Thyroid gland (tissue), 4 donors: ENCODE measurements at regions of chr3 and their contacts with region 1.

Region 1: DNA sequence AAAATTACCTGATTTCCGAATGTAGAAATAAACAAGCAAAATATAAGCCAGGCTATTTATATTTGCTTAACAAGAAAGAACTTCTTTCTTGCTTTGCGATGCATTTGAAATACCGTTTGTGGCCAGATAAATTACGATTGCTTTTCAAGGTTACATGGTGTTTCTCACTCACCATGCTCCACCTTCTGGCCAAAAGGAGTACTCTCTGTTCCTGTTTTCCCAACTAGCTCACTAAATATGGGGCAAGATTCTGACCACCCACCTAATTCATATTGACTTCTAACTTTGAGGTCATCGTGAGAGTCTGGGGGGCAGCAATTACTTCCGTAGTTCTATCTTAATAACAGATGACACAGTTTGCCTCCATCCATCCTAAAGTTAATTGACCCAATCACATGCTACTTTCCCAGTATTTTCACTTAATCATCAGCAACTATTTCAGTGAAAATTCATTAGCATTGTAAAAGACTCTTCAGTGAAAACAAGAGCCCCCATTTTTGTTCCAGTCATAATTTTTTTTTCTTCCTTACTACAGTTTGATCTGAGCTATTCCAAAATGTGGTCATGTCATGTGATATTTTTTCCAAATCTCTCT is 25.9 kb downstream of the ACP3 start:
- DNase-seq: peak; percentile 43 to 45
- H3K4me3 ChIP-seq: no peak overlapping the region
- H3K27ac ChIP-seq: no peak overlapping the region
- H3K4me1 ChIP-seq: peaks cover 6 to 12% of the 10 kb centered on the region in 2 donors
- H3K27me3 ChIP-seq: no peaks in the 10 kb centered on the region
- CTCF ChIP-seq: peak; percentile 73 to 99 (median 87)
- POLR2A ChIP-seq: no peak

Region 2: DNA sequence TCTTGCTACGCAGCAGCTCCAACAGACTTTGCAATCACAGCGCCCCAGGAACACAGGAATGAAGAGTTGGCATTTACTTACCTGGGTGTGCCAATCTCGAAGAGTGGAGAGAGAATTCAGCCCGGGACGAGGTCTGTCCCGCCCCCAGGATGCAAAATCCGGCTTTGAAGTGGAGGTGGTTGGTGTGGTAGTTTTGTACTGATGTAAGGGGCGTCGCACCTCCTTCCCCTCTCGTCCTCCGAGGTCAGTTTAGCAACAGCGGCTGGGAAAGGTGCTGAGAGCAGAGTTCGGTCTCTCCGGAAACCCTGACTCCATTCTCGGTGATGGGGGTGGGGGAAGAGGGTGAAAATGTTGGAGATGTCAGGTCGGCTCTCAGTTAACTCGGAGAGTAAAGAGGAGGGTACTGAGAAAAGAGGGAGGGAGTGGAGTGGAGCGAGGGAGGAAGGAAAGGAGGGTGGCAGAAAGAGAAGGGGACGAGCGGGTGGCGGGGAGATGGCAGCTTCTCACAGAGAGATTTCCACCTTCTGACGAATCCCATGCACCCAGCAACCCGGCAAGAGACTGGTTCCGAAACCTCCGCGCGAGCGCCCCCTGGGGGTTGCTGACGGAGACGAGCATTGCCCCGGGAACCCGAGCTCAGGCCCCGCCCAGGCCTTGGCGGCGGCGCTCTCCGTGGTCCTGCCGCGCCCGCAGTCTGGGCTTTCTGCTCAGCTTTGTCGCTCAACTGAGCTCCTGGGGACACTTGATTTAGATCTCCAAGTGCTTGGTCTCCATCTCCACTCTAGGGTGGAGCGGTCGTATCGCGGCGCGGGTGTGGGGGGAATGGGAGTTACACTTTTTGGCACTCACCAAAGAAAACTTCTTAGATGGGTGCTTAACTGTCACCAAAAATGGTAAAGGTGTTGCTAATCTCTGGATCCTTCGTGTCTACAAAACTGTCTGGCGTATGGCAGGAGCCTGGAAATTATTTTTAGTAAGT is 308.3 kb before region 1 on chr3 and contains the start of gene CPNE4:
- intact Hi-C with region 1: loop called (anchors 10 kb)
- DNase-seq: peak; percentile 81 to 89
- H3K4me3 ChIP-seq: no peak within 1 kb of the TSS
- H3K27ac ChIP-seq: no peak within 1 kb of the TSS
- H3K4me1 ChIP-seq: no peaks in the 10 kb centered on the region
- H3K27me3 ChIP-seq: no peaks in the 10 kb centered on the region
- CTCF ChIP-seq: peak in 5 of 6 experiments; percentile 51 to 78 (median 67)
- POLR2A ChIP-seq: no peak
- total RNA-seq, gene CPNE4: not detected

Region 3: DNA sequence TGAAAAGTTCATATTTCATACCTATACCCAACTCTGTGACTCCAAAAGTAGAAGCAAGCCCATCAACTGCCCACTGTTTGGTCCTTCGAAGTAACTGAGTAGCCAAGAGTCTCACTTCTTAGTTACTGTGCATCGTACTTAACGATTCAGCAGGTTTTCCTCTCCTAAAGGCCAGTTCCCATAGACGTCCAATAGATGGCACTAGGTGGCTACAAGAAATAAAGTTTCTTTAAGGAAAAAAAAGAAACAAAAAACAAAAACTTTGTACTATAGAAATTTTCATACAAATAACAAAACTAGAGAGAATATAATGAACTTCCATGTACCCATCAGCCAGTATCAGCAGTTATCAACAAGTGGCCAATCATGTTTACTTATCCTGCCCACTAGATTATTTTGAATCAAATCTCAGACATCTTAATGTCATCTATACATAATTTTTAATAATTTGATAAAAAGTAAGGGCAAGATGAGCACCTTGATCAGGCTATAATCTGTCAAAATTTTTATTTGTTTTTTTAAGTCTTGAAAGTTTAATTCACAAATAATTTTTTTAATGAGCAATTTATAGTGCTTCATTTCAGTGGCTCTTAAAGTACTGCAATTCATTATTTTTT is 89.7 kb before region 1 on chr3:
- intact Hi-C with region 1: loop called (anchors 5 kb)
- DNase-seq: peak; percentile 20 to 27
- H3K4me3 ChIP-seq: no peak overlapping the region
- H3K27ac ChIP-seq: no peak overlapping the region
- H3K4me1 ChIP-seq: peaks cover 4 to 17% of the 10 kb centered on the region in 2 donors
- H3K27me3 ChIP-seq: no peaks in the 10 kb centered on the region
- CTCF ChIP-seq: peak; percentile 21 to 78 (median 76)
- POLR2A ChIP-seq: no peak

Region 4: DNA sequence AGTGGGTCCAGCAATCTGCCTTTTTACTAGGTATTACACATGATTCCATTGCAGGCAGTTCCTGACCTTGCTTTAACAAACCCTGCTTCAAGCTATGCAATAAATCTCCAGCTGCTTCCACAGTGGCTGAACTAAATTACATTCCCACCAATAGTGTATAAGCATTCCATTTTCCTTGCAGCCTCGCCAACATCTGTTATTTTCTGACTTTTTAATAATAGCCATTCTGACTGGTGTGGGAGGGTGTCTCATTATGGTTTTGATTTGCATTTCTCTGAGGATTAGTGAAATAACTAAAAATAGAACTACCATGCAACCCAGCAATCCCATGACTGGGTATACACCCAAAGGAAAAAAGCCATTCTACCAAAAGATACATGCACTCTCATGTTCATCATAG is 37.8 kb after region 1 on chr3:
- intact Hi-C with region 1: no loop called
- DNase-seq: no peak
- H3K4me3 ChIP-seq: no peak overlapping the region
- H3K27ac ChIP-seq: no peak overlapping the region
- H3K4me1 ChIP-seq: no peaks in the 10 kb centered on the region
- H3K27me3 ChIP-seq: no peaks in the 10 kb centered on the region
- CTCF ChIP-seq: no peak
- POLR2A ChIP-seq: no peak

Region 5: GRCh38 chr3:132405188-132405587 is 62.1 kb after region 1 on chr3:
- intact Hi-C with region 1: loop called (anchors 10 kb)
- DNase-seq: no peak
- H3K4me3 ChIP-seq: no peak overlapping the region
- H3K27ac ChIP-seq: no peak overlapping the region
- H3K4me1 ChIP-seq: peaks cover 13 to 17% of the 10 kb centered on the region in 2 donors
- H3K27me3 ChIP-seq: no peaks in the 10 kb centered on the region
- CTCF ChIP-seq: no peak
- POLR2A ChIP-seq: no peak